ENCODE measurements at regions of chr5 and their contacts with region 1.

Region 1: GRCh38 chr5:40688127-40688761 is 8.5 kb downstream of the PTGER4 start:
- DNase-seq: peak; percentile 58 to 88 (median 83)
- ATAC-seq: peak; percentile 88
- H3K4me3 ChIP-seq: peak overlapping the region; percentile 38
- H3K4me3 Mint-ChIP-seq: peak overlapping the region; percentile 76 to 100 (median 95)
- H3K27ac ChIP-seq: peak overlapping the region; percentile 60
- H3K27ac Mint-ChIP-seq: peak overlapping the region; percentile 87 to 98 (median 96)
- H3K4me1 ChIP-seq: peaks cover 30 to 32% of the 10 kb centered on the region in 2 donors
- H3K4me1 Mint-ChIP-seq: peaks cover 60 to 90% (median 82%) of the 10 kb centered on the region in 7 donors
- H3K27me3 ChIP-seq: no peaks in the 10 kb centered on the region
- H3K27me3 Mint-ChIP-seq: no peaks in the 10 kb centered on the region

Region 2: DNA sequence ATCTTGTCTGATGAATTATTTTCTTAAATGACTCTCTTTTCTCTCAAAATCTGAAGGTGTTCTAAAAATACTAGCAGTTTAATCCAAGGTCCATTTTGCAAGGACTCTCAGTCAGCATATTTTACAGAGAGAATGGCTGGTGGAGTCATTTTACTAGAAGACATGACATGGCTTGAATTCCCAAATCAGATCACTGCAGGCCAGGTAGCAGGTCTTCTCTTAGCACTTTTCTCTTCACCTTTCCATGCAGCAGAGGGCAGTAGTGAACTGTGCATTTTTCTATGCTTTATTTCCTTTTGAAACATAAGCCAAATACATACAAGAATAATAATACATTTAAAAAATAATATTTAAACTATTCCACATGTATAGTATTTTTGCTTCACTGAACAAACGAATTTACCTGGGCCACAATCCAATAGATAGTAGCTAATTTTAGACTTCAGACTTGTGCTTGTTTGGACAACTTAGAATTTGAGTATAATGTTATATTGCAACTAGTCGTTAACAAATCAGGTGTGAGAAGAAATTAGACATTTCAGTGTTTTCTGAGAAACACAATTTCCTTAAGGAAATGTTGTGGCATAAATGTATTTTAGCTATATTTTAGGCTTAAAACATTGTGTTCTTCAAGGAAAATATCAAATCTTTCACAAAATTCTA is 974.1 kb before region 1 on chr5:
- CTCF ChIA-PET with region 1: interaction called, 8 read pairs
- POLR2A ChIA-PET with region 1: no interaction called
- intact Hi-C with region 1: loop called in 1 of 2 experiments (anchors 1 kb)
- DNase-seq: peak in 7 of 9 donors; percentile 4 to 51 (median 33)
- ATAC-seq: peak; percentile 63
- H3K4me3 ChIP-seq: no peak overlapping the region
- H3K4me3 Mint-ChIP-seq: no peak overlapping the region
- H3K27ac ChIP-seq: no peak overlapping the region
- H3K27ac Mint-ChIP-seq: no peak overlapping the region
- H3K4me1 ChIP-seq: no peaks in the 10 kb centered on the region
- H3K4me1 Mint-ChIP-seq: no peaks in the 10 kb centered on the region
- H3K27me3 ChIP-seq: no peaks in the 10 kb centered on the region
- H3K27me3 Mint-ChIP-seq: peaks cover 2 to 12% (median 9%) of the 10 kb centered on the region in 5 donors

Region 3: DNA sequence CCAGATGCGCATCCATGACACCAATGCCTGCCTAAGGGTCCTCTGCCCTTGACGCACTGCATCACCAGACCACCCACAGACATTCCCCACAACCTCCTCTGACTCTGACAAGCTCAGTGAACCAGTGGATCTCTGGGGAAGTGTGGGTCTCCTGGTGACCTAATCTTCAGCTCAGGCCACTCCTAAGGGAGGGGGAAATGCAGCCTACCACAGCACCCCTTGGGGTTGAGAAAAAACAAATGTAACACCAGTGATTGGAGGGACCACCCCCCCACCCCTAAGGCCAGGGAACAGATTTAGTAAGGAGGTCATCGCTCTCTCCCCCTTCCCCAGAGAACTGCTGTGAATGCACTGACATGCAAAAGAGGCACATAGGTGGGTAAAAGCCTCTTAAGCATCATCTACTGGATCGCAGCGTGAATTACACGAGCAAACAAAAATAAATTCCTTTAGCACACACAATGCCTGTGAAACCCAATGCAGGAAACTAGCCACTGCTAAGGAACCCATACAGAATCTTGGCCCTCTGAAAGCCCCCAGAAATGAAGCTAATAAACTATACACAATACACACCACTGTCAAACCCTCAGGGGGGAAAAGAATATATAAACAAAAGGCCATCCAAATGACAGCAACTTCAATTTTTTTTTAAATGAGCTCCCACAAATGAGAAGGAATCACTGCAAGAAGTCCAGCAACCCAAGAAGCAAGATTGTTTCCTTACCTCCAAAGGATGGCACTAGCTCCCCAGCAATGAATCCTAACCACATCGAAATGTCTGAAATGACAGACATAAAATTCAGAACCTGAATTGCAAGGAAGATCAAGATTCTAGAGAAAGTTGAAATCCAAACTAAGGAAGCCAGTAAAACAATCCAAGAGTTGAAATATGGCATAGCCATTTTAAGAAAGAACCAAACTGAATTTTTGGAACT is 522.2 kb before region 1 on chr5:
- CTCF ChIA-PET with region 1: interaction called, 4 read pairs
- POLR2A ChIA-PET with region 1: no interaction called
- intact Hi-C with region 1: loop called (anchors 1 kb)
- DNase-seq: peak in 1 of 9 donors; percentile 1
- ATAC-seq: no peak
- H3K4me3 ChIP-seq: no peak overlapping the region
- H3K4me3 Mint-ChIP-seq: no peak overlapping the region
- H3K27ac ChIP-seq: no peak overlapping the region
- H3K27ac Mint-ChIP-seq: no peak overlapping the region
- H3K4me1 ChIP-seq: no peaks in the 10 kb centered on the region
- H3K4me1 Mint-ChIP-seq: peaks cover 0 to 6% (median 0%) of the 10 kb centered on the region in 7 donors
- H3K27me3 ChIP-seq: no peaks in the 10 kb centered on the region
- H3K27me3 Mint-ChIP-seq: no peaks in the 10 kb centered on the region

Region 4: GRCh38 chr5:40386289-40386688 is 302.0 kb before region 1 on chr5:
- CTCF ChIA-PET with region 1: interaction called, 4 read pairs
- POLR2A ChIA-PET with region 1: interaction called, 4 read pairs
- intact Hi-C with region 1: loop called (anchors 1 kb)
- DNase-seq: no peak
- ATAC-seq: peak; percentile 62
- H3K4me3 ChIP-seq: no peak overlapping the region
- H3K4me3 Mint-ChIP-seq: peak overlapping the region in 3 of 10 donors; percentile 38 to 55 (median 48)
- H3K27ac ChIP-seq: peak overlapping the region; percentile 26
- H3K27ac Mint-ChIP-seq: peak overlapping the region in 4 of 9 donors; percentile 26 to 79 (median 54)
- H3K4me1 ChIP-seq: peaks cover 23 to 66% of the 10 kb centered on the region in 2 donors
- H3K4me1 Mint-ChIP-seq: peaks cover 37 to 86% (median 66%) of the 10 kb centered on the region in 7 donors
- H3K27me3 ChIP-seq: no peaks in the 10 kb centered on the region
- H3K27me3 Mint-ChIP-seq: no peaks in the 10 kb centered on the region

Region 5: GRCh38 chr5:40502736-40503135 is 185.5 kb before region 1 on chr5:
- CTCF ChIA-PET with region 1: no interaction called
- POLR2A ChIA-PET with region 1: interaction called, 3 read pairs
- intact Hi-C with region 1: loop called (anchors 1 kb)
- DNase-seq: no peak
- ATAC-seq: no peak
- H3K4me3 ChIP-seq: no peak overlapping the region
- H3K4me3 Mint-ChIP-seq: no peak overlapping the region
- H3K27ac ChIP-seq: no peak overlapping the region
- H3K27ac Mint-ChIP-seq: no peak overlapping the region
- H3K4me1 ChIP-seq: no peaks in the 10 kb centered on the region
- H3K4me1 Mint-ChIP-seq: peaks cover 5 to 14% (median 6%) of the 10 kb centered on the region in 7 donors
- H3K27me3 ChIP-seq: no peaks in the 10 kb centered on the region
- H3K27me3 Mint-ChIP-seq: no peaks in the 10 kb centered on the region

Region 6: GRCh38 chr5:40762705-40763104 is 74.5 kb after region 1 on chr5:
- CTCF ChIA-PET with region 1: no interaction called
- POLR2A ChIA-PET with region 1: no interaction called
- intact Hi-C with region 1: no loop called
- DNase-seq: no peak
- ATAC-seq: no peak
- H3K4me3 ChIP-seq: no peak overlapping the region
- H3K4me3 Mint-ChIP-seq: no peak overlapping the region
- H3K27ac ChIP-seq: no peak overlapping the region
- H3K27ac Mint-ChIP-seq: no peak overlapping the region
- H3K4me1 ChIP-seq: no peaks in the 10 kb centered on the region
- H3K4me1 Mint-ChIP-seq: peaks cover 0 to 3% (median 0%) of the 10 kb centered on the region in 7 donors
- H3K27me3 ChIP-seq: no peaks in the 10 kb centered on the region
- H3K27me3 Mint-ChIP-seq: no peaks in the 10 kb centered on the region

Region 7: DNA sequence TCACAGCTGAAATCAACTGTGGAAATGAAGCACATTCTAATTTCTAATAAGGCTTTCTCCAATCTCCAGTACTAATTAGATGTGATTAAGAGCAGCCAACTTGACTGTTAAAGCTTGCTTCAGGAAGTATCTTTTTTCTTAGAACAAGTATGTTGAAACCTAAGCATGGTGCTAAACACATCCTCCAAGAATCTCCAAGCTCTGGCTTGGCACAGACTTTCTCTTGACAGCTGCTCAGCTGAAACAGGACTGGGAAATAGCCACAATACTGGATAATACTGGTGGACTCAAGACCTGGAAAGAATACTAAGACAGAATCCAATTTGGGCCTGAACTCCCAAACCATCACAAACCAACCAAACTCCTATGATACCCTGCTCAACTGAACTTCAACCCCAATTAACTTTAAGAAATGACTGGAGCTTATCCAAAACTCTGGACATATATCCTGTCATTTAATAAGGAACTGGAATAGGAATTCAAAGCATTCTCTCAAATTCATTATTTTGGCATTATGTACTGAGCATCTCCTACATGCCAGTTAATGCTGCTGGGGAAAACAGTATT is 93.7 kb after region 1 on chr5:
- CTCF ChIA-PET with region 1: no interaction called
- POLR2A ChIA-PET with region 1: no interaction called
- intact Hi-C with region 1: no loop called
- DNase-seq: no peak
- ATAC-seq: no peak
- H3K4me3 ChIP-seq: no peak overlapping the region
- H3K4me3 Mint-ChIP-seq: no peak overlapping the region
- H3K27ac ChIP-seq: no peak overlapping the region
- H3K27ac Mint-ChIP-seq: no peak overlapping the region
- H3K4me1 ChIP-seq: peaks cover 10% of the 10 kb centered on the region in 2 donors
- H3K4me1 Mint-ChIP-seq: peaks cover 18 to 76% (median 72%) of the 10 kb centered on the region in 7 donors
- H3K27me3 ChIP-seq: no peaks in the 10 kb centered on the region
- H3K27me3 Mint-ChIP-seq: no peaks in the 10 kb centered on the region

Region 8: DNA sequence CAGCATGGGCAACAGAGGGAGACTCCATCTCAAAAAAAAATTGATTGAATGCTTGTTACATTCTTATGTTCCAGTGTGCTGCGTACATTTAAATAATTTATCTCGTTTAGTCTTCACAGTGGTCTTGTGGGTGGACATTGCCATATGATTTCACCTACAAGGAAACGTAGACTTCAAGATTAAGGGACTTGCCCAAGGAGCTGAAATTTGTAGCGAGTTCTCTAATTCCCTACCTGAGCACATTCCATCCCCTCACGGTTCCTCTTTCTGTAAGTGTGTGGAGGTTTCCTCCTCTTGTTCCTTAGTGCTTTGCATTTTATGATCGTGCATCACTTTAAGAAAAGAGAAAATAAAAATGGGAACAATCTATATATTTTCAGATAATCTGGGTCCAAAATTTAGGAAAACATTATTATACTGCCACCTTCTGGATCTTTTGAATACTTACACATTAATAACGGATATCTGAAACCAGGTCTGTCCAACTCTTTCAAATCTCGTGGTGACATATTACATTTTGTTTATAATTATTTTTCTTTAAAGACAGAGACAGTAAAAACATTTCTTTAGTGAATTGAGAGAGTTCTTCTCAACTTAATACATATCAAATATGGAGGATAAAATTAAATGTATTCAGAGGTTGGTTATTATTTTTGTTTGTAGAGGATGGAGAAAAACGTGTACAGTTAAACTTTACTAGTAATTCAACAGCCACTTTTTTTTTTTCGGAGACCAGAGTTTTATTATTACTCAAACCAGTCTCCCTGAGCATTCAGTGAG is 191.1 kb after region 1 on chr5:
- CTCF ChIA-PET with region 1: no interaction called
- POLR2A ChIA-PET with region 1: no interaction called
- intact Hi-C with region 1: loop called in 1 of 2 experiments (anchors 1 kb)
- DNase-seq: peak in 5 of 9 donors; percentile 23 to 39 (median 29)
- ATAC-seq: peak; percentile 45
- H3K4me3 ChIP-seq: no peak overlapping the region
- H3K4me3 Mint-ChIP-seq: no peak overlapping the region
- H3K27ac ChIP-seq: no peak overlapping the region
- H3K27ac Mint-ChIP-seq: no peak overlapping the region
- H3K4me1 ChIP-seq: no peaks in the 10 kb centered on the region
- H3K4me1 Mint-ChIP-seq: peaks cover 0 to 5% (median 0%) of the 10 kb centered on the region in 7 donors
- H3K27me3 ChIP-seq: no peaks in the 10 kb centered on the region
- H3K27me3 Mint-ChIP-seq: peaks cover 0 to 9% (median 0%) of the 10 kb centered on the region in 5 donors

Region 9: GRCh38 chr5:41009232-41009631 is 321.0 kb after region 1 on chr5:
- CTCF ChIA-PET with region 1: no interaction called
- POLR2A ChIA-PET with region 1: no interaction called
- intact Hi-C with region 1: no loop called
- DNase-seq: no peak
- ATAC-seq: no peak
- H3K4me3 ChIP-seq: no peak overlapping the region
- H3K4me3 Mint-ChIP-seq: no peak overlapping the region
- H3K27ac ChIP-seq: no peak overlapping the region
- H3K27ac Mint-ChIP-seq: no peak overlapping the region
- H3K4me1 ChIP-seq: no peaks in the 10 kb centered on the region
- H3K4me1 Mint-ChIP-seq: no peaks in the 10 kb centered on the region
- H3K27me3 ChIP-seq: no peaks in the 10 kb centered on the region
- H3K27me3 Mint-ChIP-seq: peaks cover 0 to 9% (median 4%) of the 10 kb centered on the region in 5 donors

Measured in naive thymus-derived CD4-positive, alpha-beta T cell (primary cell).